ENCODE measurements at regions of chr1 and their contacts with region 1.

Region 1: GRCh38 chr1:155938220-155938627 is 3.2 kb upstream of the RXFP4 start:
- H3K4me3 Mint-ChIP-seq: no peak overlapping the region
- H3K27ac Mint-ChIP-seq: no peak overlapping the region
- H3K4me1 Mint-ChIP-seq: peaks cover 36% of the 10 kb centered on the region
- H3K27me3 Mint-ChIP-seq: no peaks in the 10 kb centered on the region

Region 2: GRCh38 chr1:155961937-155962336 is 23.7 kb after region 1 on chr1:
- intact Hi-C with region 1: no loop called
- H3K4me3 Mint-ChIP-seq: no peak overlapping the region
- H3K27ac Mint-ChIP-seq: peak overlapping the region; percentile 69
- H3K4me1 Mint-ChIP-seq: peaks cover 67% of the 10 kb centered on the region
- H3K27me3 Mint-ChIP-seq: no peaks in the 10 kb centered on the region

Region 3: GRCh38 chr1:155978325-155978972 is 40.2 kb after region 1 on chr1 and contains the start of gene ARHGEF2:
- intact Hi-C with region 1: loop called (anchors 5 kb)
- H3K4me3 Mint-ChIP-seq: peak within 1 kb of the TSS; percentile 86
- H3K27ac Mint-ChIP-seq: peak within 1 kb of the TSS; percentile 93
- H3K4me1 Mint-ChIP-seq: peaks cover 87% of the 10 kb centered on the region
- H3K27me3 Mint-ChIP-seq: no peaks in the 10 kb centered on the region

Region 4: DNA sequence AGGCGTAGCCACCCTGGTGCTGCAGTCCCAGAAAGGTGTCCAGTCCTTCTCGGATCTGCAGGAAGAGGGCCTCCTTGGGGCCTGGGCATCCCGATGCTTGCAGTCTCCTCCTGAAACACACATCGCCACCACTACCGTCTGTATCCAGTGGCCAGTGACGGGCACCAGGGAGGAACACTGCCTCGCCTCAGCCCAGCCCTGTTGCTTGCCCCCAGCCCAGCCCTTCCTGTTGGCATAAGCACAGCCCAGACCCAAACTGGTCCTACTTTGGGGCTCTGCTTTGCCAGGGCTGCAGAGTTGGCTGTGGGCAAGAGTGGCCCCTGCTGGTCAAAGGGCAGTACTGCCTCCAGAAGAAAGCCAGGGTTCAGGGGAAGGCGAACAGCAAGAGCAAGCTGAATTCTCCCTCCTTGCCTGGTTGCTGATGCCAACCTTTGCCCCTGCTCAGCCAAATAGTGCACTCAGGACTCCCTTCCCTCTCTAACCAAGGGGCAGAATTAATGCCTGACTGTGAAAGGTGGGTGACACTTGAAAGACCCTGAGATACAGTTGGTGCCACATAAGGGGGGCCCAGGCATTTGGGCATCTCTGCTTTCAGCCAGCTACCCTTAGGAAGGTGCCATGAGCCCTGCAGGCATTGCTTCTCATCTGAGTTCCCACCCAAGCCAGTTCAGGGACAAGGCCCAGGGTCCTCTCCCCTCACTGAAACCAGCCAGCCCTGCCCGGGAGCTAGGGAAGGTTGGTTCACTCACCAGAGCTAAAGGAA is 51.2 kb after region 1 on chr1:
- intact Hi-C with region 1: loop called (anchors 1 kb)
- H3K4me3 Mint-ChIP-seq: peak overlapping the region; percentile 66
- H3K27ac Mint-ChIP-seq: peak overlapping the region; percentile 84
- H3K4me1 Mint-ChIP-seq: peaks cover 56% of the 10 kb centered on the region
- H3K27me3 Mint-ChIP-seq: no peaks in the 10 kb centered on the region

Region 5: DNA sequence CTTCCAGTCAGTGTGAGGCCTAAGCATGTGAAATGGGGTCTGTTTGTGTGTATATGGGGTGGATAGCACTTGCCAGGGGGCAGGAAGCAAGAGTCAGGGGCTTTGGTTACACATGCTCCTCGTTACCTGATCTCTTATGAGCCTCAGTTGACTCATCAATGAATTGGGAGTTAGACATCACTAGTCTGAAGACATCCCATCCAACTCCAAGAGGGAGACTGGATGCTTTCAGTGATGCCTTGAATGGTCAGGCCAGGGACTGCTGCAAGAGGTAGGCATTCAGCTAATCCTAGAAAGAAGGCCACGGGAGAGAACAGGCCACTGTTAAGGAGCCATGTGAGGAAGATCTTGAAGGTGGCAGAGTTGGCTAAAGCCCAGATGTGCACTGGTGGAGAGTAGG is 129.0 kb after region 1 on chr1:
- intact Hi-C with region 1: loop called (anchors 2 kb)
- H3K4me3 Mint-ChIP-seq: no peak overlapping the region
- H3K27ac Mint-ChIP-seq: no peak overlapping the region
- H3K4me1 Mint-ChIP-seq: peaks cover 18% of the 10 kb centered on the region
- H3K27me3 Mint-ChIP-seq: peaks cover 21% of the 10 kb centered on the region

Region 6: DNA sequence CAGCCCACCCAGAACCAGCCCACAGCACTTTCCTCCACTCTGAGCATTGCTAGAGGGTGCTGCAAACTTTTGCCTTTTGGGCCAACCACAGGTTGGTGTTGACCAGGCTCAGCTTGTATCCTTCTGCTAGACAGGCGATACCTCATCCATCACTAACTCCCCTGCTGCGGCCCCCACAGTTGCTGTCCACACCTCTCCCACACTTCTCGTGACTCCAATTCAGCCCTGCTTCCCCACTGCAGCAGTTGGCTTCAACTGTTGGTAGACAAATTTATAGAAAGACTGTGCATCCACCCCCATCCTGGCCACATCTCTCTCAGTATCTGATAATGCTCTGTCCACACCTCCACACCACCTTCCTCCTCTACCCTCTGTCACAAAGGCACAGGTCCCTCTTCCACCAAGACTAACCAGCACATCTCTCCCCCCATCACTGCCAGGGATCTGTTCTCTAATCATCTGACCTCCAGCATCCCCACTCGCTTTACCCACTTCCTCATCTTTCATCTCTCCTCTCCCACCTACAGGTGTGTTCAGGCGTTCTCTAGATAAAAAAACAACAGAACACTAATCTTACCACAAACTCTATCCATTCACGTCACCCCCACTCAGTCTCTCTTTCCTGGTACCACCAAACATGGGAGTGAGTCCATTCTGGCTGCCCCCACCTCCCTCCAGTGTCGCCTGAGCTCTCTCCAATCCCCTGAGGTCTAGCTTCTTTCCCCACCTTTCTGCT is 239.9 kb after region 1 on chr1:
- intact Hi-C with region 1: no loop called
- H3K4me3 Mint-ChIP-seq: no peak overlapping the region
- H3K27ac Mint-ChIP-seq: no peak overlapping the region
- H3K4me1 Mint-ChIP-seq: peaks cover 21% of the 10 kb centered on the region
- H3K27me3 Mint-ChIP-seq: no peaks in the 10 kb centered on the region

Measured in dendritic cell treated with granulocyte-macrophage colony-stimulating factor and Interleukin-4, amounts not matched to agents 40 ng/mL and 50 ng/mL, for 4 days (primary cell).